ENCODE measurements at regions of chr12 and their contacts with region 1.

Region 1: DNA sequence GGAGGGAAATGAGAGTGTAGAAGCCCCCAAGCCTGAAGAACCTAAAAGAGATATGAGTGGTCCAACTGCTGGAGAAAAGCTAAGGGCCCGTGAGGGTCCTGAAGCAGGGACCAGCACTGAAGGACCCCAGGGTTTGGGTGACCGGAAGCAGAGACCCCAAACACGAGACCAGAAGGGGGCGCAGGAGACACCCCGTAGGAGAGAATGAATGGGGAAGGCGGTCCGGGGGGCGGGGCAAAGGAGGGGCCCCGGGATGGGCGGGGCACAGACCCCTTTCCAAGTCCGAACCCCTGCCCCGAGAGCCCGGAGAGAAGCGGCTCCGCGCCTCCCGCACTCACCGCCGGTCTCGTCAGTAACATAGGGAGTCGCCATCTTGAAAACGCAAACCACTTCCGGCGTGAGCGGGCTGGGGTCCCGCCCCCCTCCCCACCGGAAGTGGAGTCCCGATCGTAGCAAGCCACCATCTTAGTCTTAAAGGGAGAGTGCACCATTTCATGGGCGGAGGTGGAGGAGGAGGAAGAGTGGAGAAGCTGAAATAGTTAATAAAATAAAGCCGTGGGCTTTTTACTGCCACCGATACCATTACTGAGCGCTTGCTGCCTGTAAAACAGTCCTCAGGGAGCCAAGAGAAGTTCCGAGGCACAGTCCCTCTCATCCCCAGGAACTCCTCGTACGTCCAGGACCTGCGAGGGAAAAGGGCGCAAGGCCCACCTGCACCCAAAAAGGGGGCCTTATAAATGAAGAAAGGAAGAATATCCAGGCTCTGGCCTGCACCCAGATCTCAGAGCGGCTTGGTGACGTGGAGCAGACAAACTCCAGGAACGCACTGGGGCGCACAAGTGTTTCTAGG is 731 bp downstream of the PYM1 start:
- DNase-seq: peak; percentile 84 to 93 (median 93)
- H3K4me3 ChIP-seq: peak overlapping the region; percentile 87
- H3K27ac ChIP-seq: peak overlapping the region; percentile 80 to 94
- H3K4me1 ChIP-seq: peaks cover 16% of the 10 kb centered on the region
- H3K27me3 ChIP-seq: no peaks in the 10 kb centered on the region
- CTCF ChIP-seq: peak; percentile 63 to 71 (median 68)
- EP300 ChIP-seq: no peak
- POLR2A ChIP-seq: peak; percentile 79

Region 2: GRCh38 chr12:55728939-55729823 is 197.8 kb before region 1 on chr12 and contains the start of gene CD63:
- intact Hi-C with region 1: loop called in 2 of 4 experiments (anchors 5 kb)
- DNase-seq: peak; percentile 94 to 96 (median 94)
- H3K4me3 ChIP-seq: peak within 1 kb of the TSS; percentile 96
- H3K27ac ChIP-seq: peak within 1 kb of the TSS; percentile 94 to 99
- H3K4me1 ChIP-seq: peaks cover 12% of the 10 kb centered on the region
- H3K27me3 ChIP-seq: no peaks in the 10 kb centered on the region
- CTCF ChIP-seq: no peak
- EP300 ChIP-seq: peak; percentile 89
- POLR2A ChIP-seq: peak; percentile 78
- total RNA-seq, gene CD63: 406 to 954 (median 762) TPM

Region 3: GRCh38 chr12:55829967-55830600 is 96.9 kb before region 1 on chr12:
- intact Hi-C with region 1: loop called in 3 of 4 experiments (anchors 5 kb)
- DNase-seq: peak; percentile 72 to 82 (median 80)
- H3K4me3 ChIP-seq: peak overlapping the region; percentile 72
- H3K27ac ChIP-seq: peak overlapping the region; percentile 86 to 89
- H3K4me1 ChIP-seq: peaks cover 13% of the 10 kb centered on the region
- H3K27me3 ChIP-seq: no peaks in the 10 kb centered on the region
- CTCF ChIP-seq: no peak
- EP300 ChIP-seq: no peak
- POLR2A ChIP-seq: peak; percentile 8

Region 4: GRCh38 chr12:55847603-55848291 is 79.2 kb before region 1 on chr12:
- intact Hi-C with region 1: loop called in 1 of 4 experiments (anchors 5 kb)
- DNase-seq: peak; percentile 87 to 98 (median 92)
- H3K4me3 ChIP-seq: peak overlapping the region; percentile 19
- H3K27ac ChIP-seq: peak overlapping the region; percentile 69 to 72
- H3K4me1 ChIP-seq: peaks cover 9% of the 10 kb centered on the region
- H3K27me3 ChIP-seq: no peaks in the 10 kb centered on the region
- CTCF ChIP-seq: no peak
- EP300 ChIP-seq: peak; percentile 100
- POLR2A ChIP-seq: peak; percentile 63

Region 5: DNA sequence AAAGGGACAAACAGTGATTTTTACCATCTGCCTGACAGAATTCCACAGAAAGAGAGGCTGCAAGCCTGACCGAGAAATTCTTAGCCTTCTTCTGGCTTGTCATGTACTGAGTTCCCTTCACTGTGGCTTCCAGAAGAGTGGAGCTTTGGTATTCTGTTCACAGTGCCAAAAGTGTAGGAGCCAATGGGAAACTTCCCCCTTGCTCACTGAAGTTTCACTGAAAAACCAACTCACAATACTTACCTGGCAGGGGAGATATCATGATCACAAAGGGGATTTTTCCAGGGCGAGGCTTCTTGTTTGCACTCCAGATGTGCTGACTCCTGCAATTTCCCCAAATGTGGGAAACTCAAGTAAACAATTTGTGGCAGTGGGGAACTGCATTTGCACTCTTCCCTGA is 52.5 kb before region 1 on chr12:
- intact Hi-C with region 1: no loop called
- DNase-seq: no peak
- H3K4me3 ChIP-seq: no peak overlapping the region
- H3K27ac ChIP-seq: no peak overlapping the region
- H3K4me1 ChIP-seq: no peaks in the 10 kb centered on the region
- H3K27me3 ChIP-seq: no peaks in the 10 kb centered on the region
- CTCF ChIP-seq: no peak
- EP300 ChIP-seq: no peak
- POLR2A ChIP-seq: no peak

Region 6: GRCh38 chr12:55973598-55974307 is 46.8 kb after region 1 on chr12 and contains the start of gene RAB5B:
- intact Hi-C with region 1: loop called in 1 of 4 experiments (anchors 5 kb)
- DNase-seq: peak; percentile 99 to 100 (median 99)
- H3K4me3 ChIP-seq: peak within 1 kb of the TSS; percentile 70
- H3K27ac ChIP-seq: peak within 1 kb of the TSS; percentile 80 to 86
- H3K4me1 ChIP-seq: peaks cover 2% of the 10 kb centered on the region
- H3K27me3 ChIP-seq: no peaks in the 10 kb centered on the region
- CTCF ChIP-seq: peak in 1 of 3 donors; percentile 59
- EP300 ChIP-seq: no peak
- POLR2A ChIP-seq: peak; percentile 90
- total RNA-seq, gene RAB5B: 60.4 to 136 (median 117) TPM

Region 7: GRCh38 chr12:56146492-56147460 is 219.8 kb after region 1 on chr12:
- intact Hi-C with region 1: no loop called
- DNase-seq: peak; percentile 54 to 70 (median 64)
- H3K4me3 ChIP-seq: no peak overlapping the region
- H3K27ac ChIP-seq: peak overlapping the region; percentile 10 to 35
- H3K4me1 ChIP-seq: peaks cover 6% of the 10 kb centered on the region
- H3K27me3 ChIP-seq: no peaks in the 10 kb centered on the region
- CTCF ChIP-seq: no peak
- EP300 ChIP-seq: no peak
- POLR2A ChIP-seq: no peak